ENCODE measurements at regions of chr4 and their contacts with region 1.

Region 1: GRCh38 chr4:112231779-112232713 is at the start of gene AP1AR:
- DNase-seq: peak; percentile 95
- H3K4me3 Mint-ChIP-seq: peak within 1 kb of the TSS; percentile 96
- H3K27ac Mint-ChIP-seq: peak within 1 kb of the TSS; percentile 98
- H3K4me1 Mint-ChIP-seq: peaks cover 22% of the 10 kb centered on the region
- H3K27me3 Mint-ChIP-seq: peaks cover 1% of the 10 kb centered on the region
- total RNA-seq, gene AP1AR: 20.5 and 27.0 TPM in 2 replicates

Region 2: DNA sequence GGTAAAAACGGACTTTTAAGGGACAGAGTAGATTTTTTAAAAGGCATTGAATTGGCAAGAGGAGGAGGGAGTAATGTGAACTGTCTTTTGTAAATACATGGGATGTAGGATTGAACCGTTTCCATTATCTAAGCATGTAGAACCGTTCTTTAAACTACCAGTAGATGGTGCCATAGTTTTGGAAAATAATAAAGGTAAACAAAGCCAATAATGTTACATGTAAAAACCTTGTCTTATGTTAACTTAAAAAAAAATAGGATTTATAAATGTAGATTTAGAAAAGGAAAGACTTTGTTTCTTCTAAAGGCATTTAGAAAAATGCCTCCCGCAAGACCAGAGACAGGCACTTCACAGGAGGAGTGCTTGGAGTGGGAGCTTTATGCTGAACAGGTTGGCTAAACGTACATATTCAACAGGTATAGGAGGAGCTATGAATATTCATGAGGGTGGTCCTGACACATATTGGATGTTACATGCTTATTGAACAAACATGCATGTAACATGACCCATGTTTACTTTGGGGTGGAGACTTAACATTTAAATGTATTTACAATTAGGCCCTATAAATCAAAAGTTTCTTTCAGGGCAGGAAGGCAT is 132.2 kb before region 1 on chr4:
- intact Hi-C with region 1: loop called (anchors 1 kb)
- DNase-seq: no peak
- H3K4me3 Mint-ChIP-seq: no peak overlapping the region
- H3K27ac Mint-ChIP-seq: no peak overlapping the region
- H3K4me1 Mint-ChIP-seq: peaks cover 5% of the 10 kb centered on the region
- H3K27me3 Mint-ChIP-seq: peaks cover 27% of the 10 kb centered on the region

Region 3: GRCh38 chr4:112145326-112145819 is 86.7 kb before region 1 on chr4 and contains the start of gene FAM241A:
- intact Hi-C with region 1: loop called (anchors 1 kb)
- DNase-seq: peak; percentile 96
- H3K4me3 Mint-ChIP-seq: peak within 1 kb of the TSS; percentile 89
- H3K27ac Mint-ChIP-seq: peak within 1 kb of the TSS; percentile 95
- H3K4me1 Mint-ChIP-seq: peaks cover 45% of the 10 kb centered on the region
- H3K27me3 Mint-ChIP-seq: no peaks in the 10 kb centered on the region
- total RNA-seq, gene FAM241A: 6.2 and 6.7 TPM in 2 replicates

Region 4: GRCh38 chr4:112270640-112271393 is 38.8 kb after region 1 on chr4:
- intact Hi-C with region 1: loop called (anchors 2 kb)
- DNase-seq: no peak
- H3K4me3 Mint-ChIP-seq: no peak overlapping the region
- H3K27ac Mint-ChIP-seq: no peak overlapping the region
- H3K4me1 Mint-ChIP-seq: peaks cover 33% of the 10 kb centered on the region
- H3K27me3 Mint-ChIP-seq: no peaks in the 10 kb centered on the region

Region 5: GRCh38 chr4:112302320-112303274 is 70.6 kb after region 1 on chr4:
- intact Hi-C with region 1: loop called (anchors 5 kb)
- DNase-seq: peak; percentile 73
- H3K4me3 Mint-ChIP-seq: no peak overlapping the region
- H3K27ac Mint-ChIP-seq: no peak overlapping the region
- H3K4me1 Mint-ChIP-seq: peaks cover 28% of the 10 kb centered on the region
- H3K27me3 Mint-ChIP-seq: no peaks in the 10 kb centered on the region

Region 6: DNA sequence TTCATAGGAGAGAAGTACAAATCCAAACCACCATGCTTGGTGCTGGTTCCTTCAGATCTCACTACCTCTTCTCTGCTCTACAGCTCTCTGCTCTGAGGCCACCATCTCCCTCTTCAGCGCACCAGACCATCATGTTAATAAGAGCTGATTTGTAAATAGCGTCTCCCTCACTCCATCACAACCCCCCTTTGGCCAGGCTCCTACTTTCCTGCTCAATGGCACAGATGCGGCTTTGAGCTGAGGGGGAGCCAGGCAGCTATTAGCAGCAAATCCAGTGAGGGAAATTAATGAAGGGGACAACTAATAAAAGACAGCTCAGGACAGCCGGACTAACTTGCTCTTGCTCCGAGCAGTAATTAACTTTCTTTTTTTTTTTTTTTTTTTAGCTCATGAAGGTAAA is 270.8 kb after region 1 on chr4:
- intact Hi-C with region 1: no loop called
- DNase-seq: peak; percentile 31
- H3K4me3 Mint-ChIP-seq: no peak overlapping the region
- H3K27ac Mint-ChIP-seq: no peak overlapping the region
- H3K4me1 Mint-ChIP-seq: no peaks in the 10 kb centered on the region
- H3K27me3 Mint-ChIP-seq: peaks cover 58% of the 10 kb centered on the region

Region 7: DNA sequence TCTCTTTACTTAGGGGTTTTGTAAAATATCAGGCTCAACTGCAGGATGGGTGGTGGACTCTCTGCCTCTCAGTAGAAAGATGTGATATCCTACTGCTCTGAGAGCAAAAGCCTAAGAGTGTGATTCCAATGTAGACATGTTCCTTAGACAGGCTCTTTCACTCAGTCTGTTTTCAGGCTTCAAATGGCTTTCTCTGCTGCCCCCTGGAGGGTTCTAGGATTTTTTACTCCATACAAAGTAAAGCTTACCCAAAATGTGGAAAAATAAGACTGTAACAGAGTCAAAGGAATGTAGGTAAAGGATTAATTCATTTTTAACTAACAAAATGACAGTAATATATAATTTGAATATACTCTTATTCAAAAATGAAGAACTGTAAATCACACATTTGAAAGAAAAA is 372.5 kb after region 1 on chr4:
- intact Hi-C with region 1: loop called (anchors 10 kb)
- DNase-seq: peak; percentile 84
- H3K4me3 Mint-ChIP-seq: no peak overlapping the region
- H3K27ac Mint-ChIP-seq: no peak overlapping the region
- H3K4me1 Mint-ChIP-seq: no peaks in the 10 kb centered on the region
- H3K27me3 Mint-ChIP-seq: no peaks in the 10 kb centered on the region

Measured in activated CD4-positive, alpha-beta T cell treated with anti-CD3 and anti-CD28 coated beads, Interleukin-2, amount 10 ng/mL, durations not matched to agents 24 days and 14 days (primary cell).